ENCODE measurements at regions of chr9 and their contacts with region 1.

Region 1: DNA sequence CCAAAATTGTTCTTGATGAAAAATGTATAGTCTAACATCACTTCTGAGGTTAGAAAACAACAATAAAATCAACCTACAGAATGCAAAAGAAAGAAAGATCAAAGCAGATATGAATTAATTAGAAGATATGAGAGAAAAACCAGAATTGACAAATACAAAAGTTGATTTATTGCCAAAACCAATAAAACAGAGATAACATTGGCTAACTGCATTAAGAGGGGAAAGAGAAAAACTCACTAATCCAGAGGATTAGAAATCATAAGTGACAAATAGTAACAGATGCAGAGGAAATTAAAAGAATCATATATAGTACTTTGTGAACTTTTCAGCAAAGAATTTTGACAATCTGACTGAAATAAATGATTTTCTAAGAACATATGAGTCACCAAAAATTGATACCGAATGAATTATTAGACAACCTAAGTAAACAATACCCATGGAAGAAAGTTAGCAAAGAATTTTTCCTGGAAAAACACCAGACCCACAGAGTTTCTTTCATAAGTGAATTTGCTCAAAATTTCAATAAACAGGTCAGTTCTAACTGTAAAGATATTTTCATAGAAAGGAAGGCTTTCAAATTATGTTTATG is 167.7 kb downstream of the AOPEP start:
- DNase-seq: no peak
- H3K4me3 ChIP-seq: no peak overlapping the region
- H3K27ac ChIP-seq: no peak overlapping the region
- H3K4me1 ChIP-seq: no peaks in the 10 kb centered on the region
- CTCF ChIP-seq: no peak

Region 2: DNA sequence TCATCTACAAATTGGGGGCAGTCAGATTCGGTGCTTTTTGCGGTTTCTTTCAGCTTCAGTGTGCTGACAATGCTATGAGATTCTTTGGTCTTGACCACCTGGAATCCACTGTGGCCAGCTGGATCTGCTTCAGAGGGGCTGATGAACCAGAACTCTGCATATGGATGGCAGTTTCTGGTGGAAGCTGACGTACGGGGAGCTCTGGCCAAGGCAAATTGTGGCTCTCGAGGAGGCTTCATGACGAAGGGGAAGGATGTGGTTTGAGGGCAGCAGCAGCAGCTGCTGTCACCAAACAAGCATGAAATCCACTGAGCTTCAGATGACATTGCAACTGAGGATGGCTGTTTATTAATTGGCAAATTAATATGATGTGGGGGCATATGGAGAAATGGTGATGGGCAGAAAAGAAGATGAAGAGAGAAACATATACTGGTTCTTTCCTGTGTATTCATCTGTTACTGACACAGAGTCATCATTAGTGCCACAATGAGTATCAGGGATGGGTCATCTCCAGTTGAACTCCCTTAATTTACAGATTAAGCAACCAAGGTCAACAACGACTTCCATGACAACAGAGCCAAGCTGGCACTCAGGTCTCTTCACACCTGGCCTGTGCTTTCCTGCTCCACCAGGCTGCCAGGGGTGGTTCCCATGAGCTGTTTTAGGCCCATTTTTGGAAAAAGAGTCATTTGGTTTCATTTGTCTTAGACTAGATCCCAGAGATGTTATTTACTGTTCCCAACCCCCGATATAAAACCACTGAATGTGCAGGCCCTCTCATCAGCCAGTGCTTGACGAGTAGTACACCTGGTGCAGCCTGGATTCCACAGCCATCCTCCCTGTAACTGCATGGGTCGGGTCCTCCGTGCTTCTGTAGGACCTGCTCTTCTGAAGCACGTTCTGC is 33.0 kb before region 1 on chr9:
- CTCF ChIA-PET with region 1: no interaction called
- POLR2A ChIA-PET with region 1: interaction called, 3 read pairs
- intact Hi-C with region 1: loop called (anchors 2 kb)
- DNase-seq: peak; percentile 84
- H3K4me3 ChIP-seq: peak overlapping the region; percentile 15
- H3K27ac ChIP-seq: no peak overlapping the region
- H3K4me1 ChIP-seq: peaks cover 20% of the 10 kb centered on the region
- CTCF ChIP-seq: no peak

Region 3: DNA sequence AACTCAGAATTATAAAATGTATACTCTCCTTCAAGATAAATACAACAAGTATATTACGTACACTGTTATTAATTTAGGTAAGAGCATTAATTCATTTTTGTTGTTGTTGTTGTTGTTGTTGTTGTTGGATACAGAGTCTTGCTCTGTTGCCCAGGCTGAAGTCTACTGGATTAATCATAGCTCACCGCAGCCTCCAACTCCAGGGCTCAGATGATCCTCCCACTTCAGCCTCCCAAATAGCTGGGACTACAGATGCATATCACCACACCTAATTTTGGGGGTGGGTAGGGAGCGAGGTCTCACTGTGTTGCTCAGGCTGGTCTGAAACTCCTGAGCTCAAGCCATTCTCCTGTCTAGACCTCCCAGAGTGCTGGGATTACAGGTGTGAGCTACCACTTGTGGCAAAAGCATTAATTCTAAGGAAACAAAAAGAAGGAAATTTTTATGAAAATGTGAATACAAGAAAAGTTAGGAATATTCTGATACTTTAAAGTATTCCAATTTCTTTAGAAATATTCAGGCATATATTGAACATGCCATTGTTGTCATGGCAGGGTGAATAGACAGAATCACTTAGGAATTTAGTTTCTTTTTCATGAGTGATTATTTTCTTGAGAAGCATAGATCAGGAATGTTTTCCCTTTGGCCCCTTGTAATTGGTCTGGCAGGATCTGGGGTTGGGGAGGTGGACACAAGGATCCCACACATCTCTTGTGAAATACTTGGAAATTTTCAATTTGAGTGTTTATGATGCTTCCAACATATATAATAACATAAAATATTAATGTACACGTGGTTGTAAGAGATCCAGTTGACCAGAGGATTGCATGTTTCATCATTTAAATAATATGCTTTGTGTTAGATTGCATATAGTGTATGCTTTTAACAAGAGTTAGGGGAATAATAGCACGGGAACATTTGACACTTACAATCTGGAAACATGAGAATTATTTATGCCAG is 159.7 kb after region 1 on chr9:
- CTCF ChIA-PET with region 1: no interaction called
- POLR2A ChIA-PET with region 1: no interaction called
- intact Hi-C with region 1: loop called (anchors 5 kb)
- DNase-seq: no peak
- H3K4me3 ChIP-seq: no peak overlapping the region
- H3K27ac ChIP-seq: no peak overlapping the region
- H3K4me1 ChIP-seq: no peaks in the 10 kb centered on the region
- CTCF ChIP-seq: no peak

Region 4: DNA sequence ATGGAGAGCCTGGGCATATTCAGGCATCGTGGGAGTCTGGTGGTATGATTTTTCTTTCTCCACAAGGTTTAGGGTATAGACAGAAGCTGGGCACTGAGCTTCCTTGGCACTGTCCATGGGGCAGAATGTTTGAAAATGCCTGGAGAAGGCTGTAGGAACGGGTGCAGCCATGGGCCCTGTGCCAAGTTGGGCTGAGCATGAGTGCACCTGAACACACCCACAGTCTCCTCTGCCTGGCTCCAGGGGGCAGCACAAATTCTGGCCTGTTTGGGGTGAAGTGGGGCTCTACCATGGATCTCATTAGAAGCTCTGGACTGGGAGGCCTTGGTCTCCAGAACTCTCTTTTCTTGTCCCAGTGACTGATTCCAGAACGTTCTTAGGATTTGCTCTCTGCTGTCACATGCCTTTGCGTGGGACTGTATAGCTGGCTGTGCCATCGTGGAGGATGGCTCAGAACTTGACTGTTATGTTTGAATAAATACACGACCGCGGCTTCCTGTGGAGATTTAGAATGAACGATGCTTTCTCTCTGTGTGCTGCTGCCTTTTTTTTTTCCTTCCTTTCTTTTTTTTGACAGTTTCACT is 193.5 kb after region 1 on chr9:
- CTCF ChIA-PET with region 1: no interaction called
- POLR2A ChIA-PET with region 1: no interaction called
- intact Hi-C with region 1: no loop called
- DNase-seq: peak; percentile 8
- H3K4me3 ChIP-seq: no peak overlapping the region
- H3K27ac ChIP-seq: no peak overlapping the region
- H3K4me1 ChIP-seq: no peaks in the 10 kb centered on the region
- CTCF ChIP-seq: peak; percentile 59

Measured in OCI-LY7 (cell line).